Stomach (tissue), 19 donors: ENCODE measurements at regions of chr19 and their contacts with region 1.

Region 1: GRCh38 chr19:12994701-12995595 is at the start of gene NFIX:
- DNase-seq: peak; percentile 78 to 90
- H3K4me3 ChIP-seq: peak within 1 kb of the TSS; percentile 76 to 82 (median 79)
- H3K27ac ChIP-seq: peak within 1 kb of the TSS; percentile 90 to 95 (median 94)
- H3K4me1 ChIP-seq: peaks cover 20 to 48% (median 43%) of the 10 kb centered on the region in 4 donors
- H3K27me3 ChIP-seq: peaks cover 0 to 10% (median 6%) of the 10 kb centered on the region in 3 donors
- CTCF ChIP-seq: no peak
- EP300 ChIP-seq: no peak
- POLR2A ChIP-seq: no peak
- total RNA-seq, gene NFIX: 14.0 to 183 (median 63.3) TPM

Region 2: GRCh38 chr19:13033819-13034611 is 39.1 kb after region 1 on chr19:
- intact Hi-C with region 1: loop called (anchors 5 kb)
- DNase-seq: peak; percentile 72 to 77
- H3K4me3 ChIP-seq: no peak overlapping the region
- H3K27ac ChIP-seq: peak overlapping the region; percentile 36 to 88 (median 57)
- H3K4me1 ChIP-seq: peaks cover 87 to 100% (median 95%) of the 10 kb centered on the region in 4 donors
- H3K27me3 ChIP-seq: no peaks in the 10 kb centered on the region
- CTCF ChIP-seq: peak in 5 of 7 experiments; percentile 46 to 76 (median 63)
- EP300 ChIP-seq: no peak
- POLR2A ChIP-seq: no peak

Region 3: GRCh38 chr19:13339869-13340268 is 344.9 kb after region 1 on chr19:
- intact Hi-C with region 1: no loop called
- DNase-seq: no peak
- H3K4me3 ChIP-seq: no peak overlapping the region
- H3K27ac ChIP-seq: no peak overlapping the region
- H3K4me1 ChIP-seq: no peaks in the 10 kb centered on the region
- H3K27me3 ChIP-seq: peaks cover 0 to 10% (median 0%) of the 10 kb centered on the region in 3 donors
- CTCF ChIP-seq: no peak
- EP300 ChIP-seq: no peak
- POLR2A ChIP-seq: no peak